ENCODE measurements at regions of chr6 and their contacts with region 1.

Region 1: GRCh38 chr6:99330159-99330558 is 19.3 kb downstream of the FAXC start:
- DNase-seq: peak; percentile 36
- H3K4me3 ChIP-seq: no peak overlapping the region
- H3K27ac ChIP-seq: no peak overlapping the region
- H3K27me3 ChIP-seq: no peaks in the 10 kb centered on the region
- CTCF ChIP-seq: peak; percentile 81

Region 2: DNA sequence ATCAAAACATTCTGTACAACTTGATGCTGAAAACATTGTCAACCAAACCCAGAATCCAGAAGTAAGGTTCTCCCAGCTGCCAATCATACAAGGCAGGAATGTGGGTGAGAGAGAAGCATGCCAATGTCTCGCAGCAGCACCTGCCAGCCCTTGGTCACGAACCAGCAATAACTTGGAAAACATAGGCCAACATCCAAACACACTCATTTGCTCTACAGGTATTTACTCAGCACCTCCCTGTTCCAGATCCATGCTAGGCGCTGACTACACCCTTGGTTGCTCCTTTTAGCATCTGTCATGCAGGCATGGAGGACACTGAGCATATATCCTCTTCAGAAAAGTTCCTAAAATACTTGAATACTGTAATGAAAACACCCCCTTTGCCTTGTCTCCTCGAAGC is 44.3 kb before region 1 on chr6:
- CTCF ChIA-PET with region 1: interaction called, 12 read pairs
- POLR2A ChIA-PET with region 1: no interaction called
- DNase-seq: no peak
- H3K4me3 ChIP-seq: no peak overlapping the region
- H3K27ac ChIP-seq: no peak overlapping the region
- H3K27me3 ChIP-seq: no peaks in the 10 kb centered on the region
- CTCF ChIP-seq: no peak

Region 3: GRCh38 chr6:99318542-99318941 is 11.6 kb before region 1 on chr6:
- CTCF ChIA-PET with region 1: interaction called, 57 read pairs
- POLR2A ChIA-PET with region 1: no interaction called
- DNase-seq: no peak
- H3K4me3 ChIP-seq: no peak overlapping the region
- H3K27ac ChIP-seq: no peak overlapping the region
- H3K27me3 ChIP-seq: no peaks in the 10 kb centered on the region
- CTCF ChIP-seq: no peak

Region 4: DNA sequence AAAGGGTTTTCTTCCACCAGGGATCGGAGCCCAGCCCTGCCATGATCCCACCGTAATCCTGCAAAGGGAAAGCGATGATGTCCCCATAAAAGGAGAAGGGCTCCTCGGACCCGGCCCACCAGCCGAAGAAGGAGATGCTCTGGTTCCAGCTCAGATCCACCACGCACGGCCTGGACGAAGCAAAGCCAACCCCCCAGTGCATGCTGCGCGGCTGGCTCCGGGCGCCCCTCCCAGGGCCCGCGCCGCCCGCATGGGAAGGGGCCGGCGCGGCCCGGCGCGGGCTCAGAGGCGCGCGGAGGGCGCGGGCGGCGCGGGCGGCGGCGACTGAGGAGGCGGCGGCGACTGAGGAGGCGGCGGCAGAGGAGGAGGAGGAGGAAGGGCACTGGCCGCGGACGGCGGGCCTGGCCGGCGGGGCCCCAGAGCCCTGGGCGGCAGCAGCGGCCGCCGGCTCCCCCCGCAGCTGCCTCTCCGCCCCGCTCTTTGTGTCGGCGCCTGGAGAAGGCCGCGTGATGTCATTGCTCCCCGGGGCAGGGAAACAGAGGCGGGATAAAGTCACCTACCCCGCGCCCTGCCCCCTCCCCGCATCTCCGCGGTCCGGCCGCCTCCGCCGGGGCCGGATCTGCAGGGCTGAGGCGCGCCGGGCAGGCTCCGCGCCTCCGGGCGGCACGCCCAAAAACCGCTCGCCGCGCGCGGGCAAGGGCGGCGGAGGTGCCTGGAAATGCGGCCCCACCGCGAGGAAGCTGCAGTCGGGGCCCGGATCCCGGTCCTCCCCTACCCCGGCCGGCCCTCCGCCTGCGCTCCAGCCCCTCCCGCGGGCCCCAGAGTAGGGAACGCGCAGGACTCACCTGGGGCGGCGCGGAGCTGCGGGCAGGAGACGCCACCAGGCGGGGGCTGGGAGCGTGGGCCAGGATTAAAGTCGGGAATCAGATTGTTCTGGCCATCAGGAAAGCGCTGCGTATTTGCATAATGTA is 19.3 kb after region 1 on chr6 and contains the start of gene FAXC:
- CTCF ChIA-PET with region 1: interaction called, 71 read pairs
- POLR2A ChIA-PET with region 1: no interaction called
- DNase-seq: no peak
- H3K4me3 ChIP-seq: peak within 1 kb of the TSS; percentile 66
- H3K27ac ChIP-seq: no peak within 1 kb of the TSS
- H3K27me3 ChIP-seq: peaks cover 5% of the 10 kb centered on the region
- CTCF ChIP-seq: peak; percentile 24; the same call in 1 of the 2 replicates
- polyA plus RNA-seq, gene FAXC: 7.0 and 8.4 TPM in 2 replicates

Region 5: DNA sequence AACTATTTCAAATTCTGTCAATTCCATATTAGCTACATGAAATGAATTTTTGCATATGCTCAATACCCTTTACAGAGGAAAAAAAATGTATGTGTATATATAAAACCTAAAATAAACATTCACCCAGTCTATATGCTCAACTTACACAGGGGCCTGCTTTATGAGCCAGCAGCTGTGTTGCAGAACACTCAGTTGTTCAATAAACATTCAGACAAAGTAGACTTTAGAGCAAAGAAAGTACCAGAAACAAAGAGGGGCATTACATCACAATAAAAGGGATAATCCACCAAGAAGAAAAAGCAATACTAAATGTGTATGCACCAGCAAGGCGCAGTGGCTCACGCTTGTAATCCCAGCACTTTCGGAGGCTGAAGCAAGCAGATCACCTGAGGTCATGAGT is 54.3 kb after region 1 on chr6:
- CTCF ChIA-PET with region 1: interaction called, 12 read pairs
- POLR2A ChIA-PET with region 1: no interaction called
- DNase-seq: peak; percentile 20
- H3K4me3 ChIP-seq: no peak overlapping the region
- H3K27ac ChIP-seq: no peak overlapping the region
- H3K27me3 ChIP-seq: no peaks in the 10 kb centered on the region
- CTCF ChIP-seq: no peak

Region 6: DNA sequence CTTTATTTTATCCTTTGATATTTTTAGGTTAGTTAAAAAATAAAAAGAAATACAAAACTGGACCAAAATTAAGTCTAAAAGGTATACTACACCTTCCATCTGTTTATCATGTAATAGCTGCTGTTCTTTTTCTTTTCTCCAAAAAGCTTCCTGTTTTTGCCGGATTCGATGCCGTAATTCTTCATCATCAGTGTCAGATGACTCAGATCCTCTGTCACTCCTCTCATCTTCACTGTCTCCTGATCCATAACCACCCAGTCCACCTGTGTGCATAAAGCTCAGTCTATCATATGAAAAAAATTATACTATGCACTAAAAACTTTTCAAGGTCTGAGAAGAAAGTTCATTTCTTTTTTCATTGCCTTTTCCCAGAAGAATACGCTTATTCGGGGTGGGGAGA is 72.3 kb after region 1 on chr6:
- CTCF ChIA-PET with region 1: interaction called, 20 read pairs
- POLR2A ChIA-PET with region 1: no interaction called
- DNase-seq: no peak
- H3K4me3 ChIP-seq: no peak overlapping the region
- H3K27ac ChIP-seq: no peak overlapping the region
- H3K27me3 ChIP-seq: no peaks in the 10 kb centered on the region
- CTCF ChIP-seq: no peak

Region 7: DNA sequence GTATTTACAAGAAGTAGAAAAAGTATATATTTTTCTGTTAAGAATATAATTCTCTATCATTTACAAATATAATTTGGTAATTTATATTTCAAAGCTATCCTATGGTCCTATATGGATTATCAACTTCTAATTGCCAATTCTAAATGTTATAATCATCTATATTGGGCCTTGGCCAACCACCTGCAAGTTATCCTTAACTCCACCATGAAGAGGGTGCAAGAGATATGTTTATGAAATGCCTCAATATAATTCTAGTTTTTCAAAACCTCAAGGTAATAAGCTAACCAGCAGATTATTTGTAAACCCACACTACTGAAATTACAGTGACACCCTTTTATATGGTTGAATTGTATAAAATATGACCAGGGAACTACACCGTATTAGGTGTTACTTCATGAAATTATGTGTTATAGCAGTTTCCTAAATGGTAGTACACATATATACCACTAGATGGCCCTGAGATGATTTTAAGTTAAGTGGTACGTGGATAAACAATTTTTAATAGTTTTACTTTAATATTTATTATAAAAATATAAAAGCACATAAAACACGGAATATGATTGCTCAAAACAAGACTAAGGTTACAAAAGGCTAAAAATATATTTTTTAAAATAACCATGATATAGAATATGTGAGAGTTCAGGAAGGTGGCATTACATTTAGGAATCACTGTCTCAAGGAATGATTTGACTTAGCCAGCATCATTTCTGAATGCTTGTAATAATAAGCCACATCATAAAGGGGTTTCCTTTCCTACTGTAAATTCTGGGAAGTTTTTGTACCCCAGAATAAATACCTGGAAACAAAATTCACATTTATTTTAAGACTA is 104.8 kb after region 1 on chr6:
- CTCF ChIA-PET with region 1: interaction called, 23 read pairs
- POLR2A ChIA-PET with region 1: no interaction called
- DNase-seq: no peak
- H3K4me3 ChIP-seq: no peak overlapping the region
- H3K27ac ChIP-seq: no peak overlapping the region
- H3K27me3 ChIP-seq: no peaks in the 10 kb centered on the region
- CTCF ChIP-seq: peak; percentile 66